Activated naive CD4-positive, alpha-beta T cell treated with anti-CD3 and anti-CD28 coated beads, Interleukin-2, amount 10 ng/mL, durations not matched to agents 7 days and 5 days (primary cell): ENCODE measurements at regions of chr1 and their contacts with region 1.

Region 1: DNA sequence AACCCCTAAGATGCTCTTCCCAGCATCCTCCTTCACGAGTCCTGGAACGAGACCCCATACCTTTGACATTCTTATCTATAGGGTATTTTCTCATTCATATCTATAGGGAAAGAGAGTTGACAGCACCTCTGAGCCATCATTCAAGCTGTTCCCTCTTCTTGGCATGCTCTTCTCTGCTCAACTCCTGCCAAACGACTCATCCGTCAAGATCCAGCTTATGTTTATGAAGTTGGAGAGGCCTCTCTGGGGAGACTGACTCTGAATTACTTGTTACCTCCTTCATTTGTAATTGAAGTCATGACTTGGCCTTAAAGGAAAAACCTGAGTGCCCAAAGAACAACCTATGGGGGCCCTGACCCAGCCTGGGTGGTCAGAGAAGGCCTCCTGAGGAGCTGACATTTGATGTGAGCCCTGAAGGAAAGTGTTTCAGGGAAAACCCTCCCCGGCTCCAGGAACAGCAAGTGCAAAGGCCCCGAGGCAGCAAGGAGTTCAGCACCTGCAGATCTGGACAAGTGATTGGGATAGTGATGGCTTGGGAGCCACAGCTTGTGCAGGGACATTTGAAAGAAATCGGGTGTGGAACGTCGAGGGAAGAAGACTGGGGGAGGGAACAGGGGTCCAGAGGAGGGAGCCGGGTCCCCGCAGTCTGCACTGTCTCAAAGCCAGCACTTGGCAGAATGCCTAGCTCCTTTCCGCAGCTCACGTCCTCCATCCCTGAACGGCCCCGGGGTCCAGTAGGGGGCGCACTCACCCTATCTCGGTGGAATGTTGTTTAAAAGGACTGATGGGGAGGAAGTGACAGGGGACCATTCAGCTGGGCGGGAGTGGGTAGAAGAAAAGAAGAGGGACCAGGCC is 14.0 kb upstream of the CDA start:
- DNase-seq: peak; percentile 86
- H3K4me3 Mint-ChIP-seq: no peak overlapping the region
- H3K27ac Mint-ChIP-seq: no peak overlapping the region
- H3K4me1 Mint-ChIP-seq: no peaks in the 10 kb centered on the region
- H3K27me3 Mint-ChIP-seq: peaks cover 33% of the 10 kb centered on the region

Region 2: GRCh38 chr1:20633190-20634064 is 58.5 kb after region 1 on chr1 and contains the start of gene PINK1:
- CTCF ChIA-PET with region 1: interaction called, 13 read pairs
- DNase-seq: peak; percentile 86
- H3K4me3 Mint-ChIP-seq: peak within 1 kb of the TSS; percentile 81
- H3K27ac Mint-ChIP-seq: peak within 1 kb of the TSS; percentile 87
- H3K4me1 Mint-ChIP-seq: peaks cover 10% of the 10 kb centered on the region
- H3K27me3 Mint-ChIP-seq: peaks cover 10% of the 10 kb centered on the region

Region 3: GRCh38 chr1:20640183-20640597 is 65.3 kb after region 1 on chr1:
- CTCF ChIA-PET with region 1: interaction called, 10 read pairs
- DNase-seq: peak; percentile 72
- H3K4me3 Mint-ChIP-seq: no peak overlapping the region
- H3K27ac Mint-ChIP-seq: no peak overlapping the region
- H3K4me1 Mint-ChIP-seq: no peaks in the 10 kb centered on the region
- H3K27me3 Mint-ChIP-seq: no peaks in the 10 kb centered on the region